Head of caudate nucleus (tissue), 42 donors: ENCODE measurements at regions of chr1 and their contacts with region 1.

Region 1: GRCh38 chr1:180533266-180533987 is 25.3 kb upstream of the OVAAL start:
- DNase-seq: peak; percentile 56 to 89 (median 74)

Region 2: DNA sequence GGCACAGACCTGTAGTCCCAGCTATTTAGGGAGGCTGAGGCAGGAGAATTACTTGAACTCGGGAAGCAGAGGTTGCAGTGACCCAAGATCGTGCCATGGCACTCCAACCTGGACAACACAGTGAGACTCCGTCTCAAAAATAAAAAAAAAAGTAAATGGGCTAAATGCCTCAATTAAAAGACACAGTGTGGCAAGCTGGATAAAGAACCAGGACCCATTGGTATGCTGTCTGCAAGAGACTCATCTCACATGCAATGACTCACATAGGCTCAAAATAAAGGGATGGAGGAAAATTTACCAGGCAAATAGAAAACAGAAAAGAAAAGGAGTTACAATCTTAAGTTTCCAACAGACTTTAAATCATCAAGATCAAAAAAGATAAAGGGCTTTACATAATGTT is 71.3 kb before region 1 on chr1:
- intact Hi-C with region 1: no loop called
- DNase-seq: no peak

Region 3: DNA sequence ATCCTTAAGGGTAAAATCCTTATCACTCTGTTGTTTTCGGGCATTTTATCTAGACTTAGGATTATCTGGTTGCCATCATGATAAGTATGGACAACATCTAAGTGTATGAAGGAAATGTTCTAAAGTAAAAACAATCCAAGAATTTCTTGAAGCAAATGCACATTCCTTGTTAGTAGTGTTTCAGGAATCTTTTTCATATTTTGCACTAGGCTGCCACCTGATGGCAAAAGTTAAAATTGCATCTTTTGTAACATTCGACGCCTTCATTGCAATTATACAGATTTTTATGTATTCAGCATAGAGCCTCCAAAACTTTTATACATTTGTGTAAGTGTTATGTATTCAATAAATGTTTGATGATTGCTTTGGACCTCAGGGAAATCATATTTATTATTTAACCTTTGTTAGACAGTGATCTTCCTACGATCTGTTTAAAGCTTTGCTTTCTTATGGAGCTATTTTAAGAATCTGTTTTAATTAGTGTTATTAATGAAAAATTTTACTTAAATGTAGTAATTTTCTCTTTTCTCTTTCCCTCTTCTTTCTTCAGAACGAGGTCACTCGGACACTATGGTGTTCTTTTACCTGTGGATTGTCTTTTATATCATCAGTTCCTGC is 329.8 kb after region 1 on chr1:
- intact Hi-C with region 1: loop called (anchors 5 kb)
- DNase-seq: peak in 19 of 42 donors; percentile 8 to 77 (median 49)